HepG2 (cell line): ENCODE measurements at regions of chr1 and their contacts with region 1.

Region 1: GRCh38 chr1:27830621-27831424 is at the start of gene PPP1R8:
- DNase-seq: peak; percentile 93
- ATAC-seq: peak; percentile 99
- H3K4me3 ChIP-seq: peak within 1 kb of the TSS; percentile 82 to 98 (median 86)
- H3K27ac ChIP-seq: peak within 1 kb of the TSS; percentile 93
- H3K4me1 ChIP-seq: peaks cover 63% of the 10 kb centered on the region
- H3K27me3 ChIP-seq: no peaks in the 10 kb centered on the region; a peak in 1 of 5 replicates
- CTCF ChIP-seq: 0 out of 2 replicates have a peak, but pooled peaks have one; percentile 1
- EP300 ChIP-seq: peak in 1 of 2 experiments; percentile 33; a peak in 1 of 4 replicates
- POLR2A ChIP-seq: peak; percentile 90 to 93
- RAD21 ChIP-seq: peak; percentile 35; the same call in 1 of the 2 replicates
- total RNA-seq, gene PPP1R8: 62.2 and 98.1 TPM in 2 replicates

Region 2: DNA sequence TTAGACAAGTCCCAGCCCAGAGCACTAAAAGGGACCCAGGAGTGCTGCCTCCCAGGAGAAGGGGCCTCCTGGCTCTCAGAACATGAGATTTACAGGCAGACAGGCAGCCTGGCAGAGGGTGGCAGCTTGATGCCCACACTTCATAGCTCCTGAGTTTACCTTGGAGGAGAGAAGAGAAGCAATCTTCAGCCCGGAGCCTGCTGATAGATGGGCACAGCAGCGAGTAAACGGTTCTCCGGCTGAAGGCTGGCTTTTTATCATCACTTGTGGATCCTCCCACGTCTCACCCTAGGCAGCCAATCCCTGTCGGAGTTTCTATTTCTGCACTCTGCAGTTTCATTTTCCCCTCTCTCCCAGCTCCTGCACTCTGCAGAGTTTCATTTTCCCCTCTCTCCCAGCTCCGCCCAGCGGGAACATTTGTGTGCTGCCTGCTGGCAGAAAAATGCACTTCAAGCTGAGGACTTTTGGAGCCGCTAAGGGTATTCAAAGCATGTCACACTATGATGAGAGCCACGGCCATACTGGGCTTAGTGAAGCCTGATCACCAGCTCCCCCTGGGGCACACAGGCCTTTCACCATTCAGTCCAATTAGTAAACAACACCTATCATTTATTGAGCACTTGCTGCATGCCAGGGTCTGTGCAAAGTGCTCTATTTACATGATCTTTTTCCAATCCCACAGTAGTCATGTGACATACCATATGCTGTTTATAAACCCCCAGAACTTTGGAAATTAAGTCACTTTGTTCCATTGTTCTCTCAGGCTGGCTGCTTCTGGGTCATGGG is 158.7 kb before region 1 on chr1 and contains the start of gene IFI6:
- CTCF ChIA-PET with region 1: no interaction called
- POLR2A ChIA-PET with region 1: interaction called, 6 read pairs
- in situ Hi-C with region 1: no loop called
- intact Hi-C with region 1: loop called (anchors 5 kb)
- DNase-seq: peak; percentile 96
- ATAC-seq: peak; percentile 98
- H3K4me3 ChIP-seq: peak within 1 kb of the TSS; percentile 48 to 70 (median 61)
- H3K27ac ChIP-seq: peak within 1 kb of the TSS; percentile 58
- H3K4me1 ChIP-seq: peaks cover 40% of the 10 kb centered on the region
- H3K27me3 ChIP-seq: no peaks in the 10 kb centered on the region
- CTCF ChIP-seq: peak; percentile 50
- EP300 ChIP-seq: no peak
- POLR2A ChIP-seq: peak; percentile 56 to 73
- RAD21 ChIP-seq: peak; percentile 29; the same call in 1 of the 2 replicates
- total RNA-seq, gene IFI6: 6.1 and 13.2 TPM in 2 replicates

Region 3: DNA sequence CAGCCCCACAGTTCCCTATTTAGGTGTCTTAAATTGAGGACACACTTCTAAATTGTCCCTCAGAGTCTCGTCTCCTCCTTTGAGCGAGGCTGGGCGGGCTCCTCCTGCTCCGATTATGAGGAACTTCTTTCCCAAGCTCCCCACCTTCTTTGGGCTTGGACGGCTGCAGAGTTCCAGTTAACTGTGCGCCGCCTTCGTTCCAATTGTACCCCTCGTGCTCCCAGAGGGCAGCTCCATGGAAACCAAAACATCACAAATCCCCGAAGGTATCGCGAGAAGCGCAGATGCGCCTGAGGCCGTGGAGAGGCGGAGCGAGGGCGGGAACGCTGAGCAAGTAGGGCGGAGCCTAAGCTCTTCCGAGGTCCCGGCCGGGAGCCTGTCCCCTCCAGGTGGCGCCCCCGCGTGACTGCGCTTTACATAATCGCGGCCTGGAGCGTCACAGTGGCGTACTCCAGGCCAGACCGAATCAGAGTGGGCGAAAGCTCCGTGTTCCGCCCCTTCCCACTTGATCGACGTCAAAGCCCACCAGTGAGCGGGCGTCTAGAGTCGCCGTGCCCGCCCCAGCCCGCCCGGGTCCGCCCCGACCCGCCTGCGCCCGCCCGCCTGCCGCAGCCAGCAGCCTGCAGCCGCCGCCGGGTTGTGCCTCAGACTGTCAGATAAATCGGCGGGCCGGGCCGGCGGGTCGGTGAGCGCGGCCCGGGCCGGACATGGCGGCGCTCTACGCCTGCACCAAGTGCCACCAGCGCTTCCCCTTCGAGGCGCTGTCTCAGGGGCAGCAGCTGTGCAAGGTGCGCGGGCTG is 105.2 kb before region 1 on chr1 and contains the start of gene FAM76A:
- CTCF ChIA-PET with region 1: no interaction called
- POLR2A ChIA-PET with region 1: interaction called, 22 read pairs
- in situ Hi-C with region 1: no loop called
- intact Hi-C with region 1: no loop called
- DNase-seq: peak; percentile 97
- ATAC-seq: peak; percentile 94
- H3K4me3 ChIP-seq: peak within 1 kb of the TSS; percentile 84 to 99 (median 91)
- H3K27ac ChIP-seq: peak within 1 kb of the TSS; percentile 99
- H3K4me1 ChIP-seq: peaks cover 33% of the 10 kb centered on the region
- H3K27me3 ChIP-seq: no peaks in the 10 kb centered on the region
- CTCF ChIP-seq: peak; percentile 92
- EP300 ChIP-seq: peak in 1 of 2 experiments; percentile 31; a peak in 1 of 4 replicates
- POLR2A ChIP-seq: peak; percentile 57 to 70
- RAD21 ChIP-seq: 0 out of 2 replicates have a peak, but pooled peaks have one; percentile 1
- total RNA-seq, gene FAM76A: 15.7 and 18.8 TPM in 2 replicates

Region 4: GRCh38 chr1:27772933-27773825 is 57.6 kb before region 1 on chr1 and contains the start of gene STX12:
- CTCF ChIA-PET with region 1: no interaction called
- POLR2A ChIA-PET with region 1: interaction called, 45 read pairs
- in situ Hi-C with region 1: no loop called
- intact Hi-C with region 1: loop called (anchors 5 kb)
- DNase-seq: peak; percentile 95
- ATAC-seq: peak; percentile 96
- H3K4me3 ChIP-seq: peak within 1 kb of the TSS; percentile 77 to 98 (median 88)
- H3K27ac ChIP-seq: peak within 1 kb of the TSS; percentile 55
- H3K4me1 ChIP-seq: peaks cover 36% of the 10 kb centered on the region
- H3K27me3 ChIP-seq: no peaks in the 10 kb centered on the region; a peak in 1 of 5 replicates
- CTCF ChIP-seq: no peak
- EP300 ChIP-seq: no peak
- POLR2A ChIP-seq: peak; percentile 81 to 88
- RAD21 ChIP-seq: 0 out of 2 replicates have a peak, but pooled peaks have one; percentile 28
- total RNA-seq, gene STX12: 16.3 and 19.7 TPM in 2 replicates

Region 5: GRCh38 chr1:27795601-27796000 is 35.2 kb before region 1 on chr1:
- CTCF ChIA-PET with region 1: no interaction called
- POLR2A ChIA-PET with region 1: interaction called, 4 read pairs
- in situ Hi-C with region 1: no loop called
- intact Hi-C with region 1: loop called (anchors 1 kb)
- DNase-seq: no peak
- ATAC-seq: no peak
- H3K4me3 ChIP-seq: no peak overlapping the region
- H3K27ac ChIP-seq: no peak overlapping the region
- H3K4me1 ChIP-seq: no peaks in the 10 kb centered on the region
- H3K27me3 ChIP-seq: no peaks in the 10 kb centered on the region
- CTCF ChIP-seq: no peak
- EP300 ChIP-seq: no peak
- POLR2A ChIP-seq: no peak
- RAD21 ChIP-seq: no peak

Region 6: DNA sequence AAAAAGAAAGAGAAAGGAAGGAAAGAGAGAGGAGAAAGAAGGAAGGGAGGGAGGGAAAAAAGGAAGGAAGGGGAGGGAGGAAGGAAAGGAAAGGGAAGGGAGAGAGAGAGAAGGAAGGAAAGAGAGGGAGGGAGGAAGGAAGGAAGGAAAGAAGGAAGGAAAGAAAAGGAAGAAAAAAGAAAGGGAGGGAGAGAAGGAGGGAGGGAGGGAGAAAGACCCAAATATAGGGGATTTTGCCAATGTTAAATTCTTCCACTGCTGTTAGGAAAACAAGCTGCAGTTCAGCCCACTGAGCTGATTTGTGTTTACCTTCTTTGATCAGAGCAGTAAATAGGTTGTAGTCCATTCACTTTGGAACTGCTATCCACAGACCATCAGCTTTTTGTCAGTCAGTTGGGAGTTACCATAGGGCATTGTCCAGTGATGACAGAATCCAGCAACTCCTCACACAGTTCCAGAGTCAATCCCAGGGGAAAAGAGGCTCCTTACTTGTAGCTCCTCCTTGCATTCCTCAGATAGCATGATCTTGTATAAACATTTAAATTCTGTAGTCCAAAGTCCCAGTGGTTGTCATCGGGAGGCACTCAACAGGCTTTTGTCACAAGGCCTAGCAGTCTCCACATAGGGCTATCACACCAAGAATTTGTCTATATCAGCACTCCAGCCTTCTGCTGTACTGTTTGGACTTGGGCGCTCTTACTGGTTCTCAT is 13.7 kb before region 1 on chr1:
- CTCF ChIA-PET with region 1: no interaction called
- POLR2A ChIA-PET with region 1: interaction called, 89 read pairs
- in situ Hi-C with region 1: no loop called
- intact Hi-C with region 1: no loop called
- DNase-seq: peak; percentile 98
- ATAC-seq: peak; percentile 99
- H3K4me3 ChIP-seq: peak overlapping the region in 1 of 3 experiments; percentile 35; a peak in 1 of 6 replicates
- H3K27ac ChIP-seq: peak overlapping the region; percentile 91
- H3K4me1 ChIP-seq: peaks cover 31% of the 10 kb centered on the region
- H3K27me3 ChIP-seq: no peaks in the 10 kb centered on the region
- CTCF ChIP-seq: no peak
- EP300 ChIP-seq: peak in 1 of 2 experiments; percentile 54; a peak in 2 of 4 replicates
- POLR2A ChIP-seq: peak in 1 of 2 experiments; percentile 47; a peak in 1 of 4 replicates
- RAD21 ChIP-seq: no peak